Right cardiac atrium (tissue), 5 donors: ENCODE measurements at regions of chr5 and their contacts with region 1.

Region 1: GRCh38 chr5:141681695-141682641 is at the start of gene ARAP3:
- DNase-seq: peak; percentile 94 to 97 (median 96)
- ATAC-seq: peak; percentile 89 to 93
- H3K4me3 ChIP-seq: peak within 1 kb of the TSS; percentile 58
- H3K27ac ChIP-seq: peak within 1 kb of the TSS; percentile 42
- H3K4me1 ChIP-seq: no peaks in the 10 kb centered on the region
- H3K27me3 ChIP-seq: no peaks in the 10 kb centered on the region
- total RNA-seq, gene ARAP3: 13.6 to 18.8 (median 17.4) TPM

Region 2: GRCh38 chr5:141657937-141658545 is 23.9 kb before region 1 on chr5:
- intact Hi-C with region 1: no loop called
- DNase-seq: no peak
- ATAC-seq: no peak
- H3K4me3 ChIP-seq: no peak overlapping the region
- H3K27ac ChIP-seq: no peak overlapping the region
- H3K4me1 ChIP-seq: no peaks in the 10 kb centered on the region
- H3K27me3 ChIP-seq: no peaks in the 10 kb centered on the region

Region 3: DNA sequence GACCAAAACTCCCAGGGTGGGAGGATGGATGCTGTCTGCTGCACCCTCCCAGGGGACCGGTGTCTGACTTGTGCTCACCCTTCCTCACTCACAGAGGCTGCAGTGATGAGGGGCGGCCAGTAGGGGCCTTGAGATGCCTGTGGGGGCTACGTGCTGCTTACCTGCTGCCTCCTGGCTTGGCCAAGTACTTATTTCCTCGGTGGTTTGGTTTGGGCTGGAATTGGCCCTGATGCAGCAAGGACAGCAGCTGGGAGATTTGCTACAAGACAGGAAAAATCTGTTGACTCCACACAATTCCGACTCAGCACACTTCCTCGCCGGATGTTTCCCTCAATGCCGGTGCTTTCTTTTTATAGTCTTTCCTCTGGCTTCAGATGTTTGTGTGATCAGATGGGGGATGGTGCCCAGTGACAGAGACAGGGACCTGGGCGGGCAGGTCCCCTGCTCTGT is 269.4 kb after region 1 on chr5:
- intact Hi-C with region 1: loop called in 1 of 4 experiments (anchors 5 kb)
- DNase-seq: peak in 1 of 3 donors; percentile 55
- ATAC-seq: peak; percentile 4 to 25
- H3K4me3 ChIP-seq: no peak overlapping the region
- H3K27ac ChIP-seq: no peak overlapping the region
- H3K4me1 ChIP-seq: peaks cover 6% of the 10 kb centered on the region
- H3K27me3 ChIP-seq: no peaks in the 10 kb centered on the region